Heart left ventricle (tissue), 16 donors: ENCODE measurements at regions of chr6 and their contacts with region 1.

Region 1: DNA sequence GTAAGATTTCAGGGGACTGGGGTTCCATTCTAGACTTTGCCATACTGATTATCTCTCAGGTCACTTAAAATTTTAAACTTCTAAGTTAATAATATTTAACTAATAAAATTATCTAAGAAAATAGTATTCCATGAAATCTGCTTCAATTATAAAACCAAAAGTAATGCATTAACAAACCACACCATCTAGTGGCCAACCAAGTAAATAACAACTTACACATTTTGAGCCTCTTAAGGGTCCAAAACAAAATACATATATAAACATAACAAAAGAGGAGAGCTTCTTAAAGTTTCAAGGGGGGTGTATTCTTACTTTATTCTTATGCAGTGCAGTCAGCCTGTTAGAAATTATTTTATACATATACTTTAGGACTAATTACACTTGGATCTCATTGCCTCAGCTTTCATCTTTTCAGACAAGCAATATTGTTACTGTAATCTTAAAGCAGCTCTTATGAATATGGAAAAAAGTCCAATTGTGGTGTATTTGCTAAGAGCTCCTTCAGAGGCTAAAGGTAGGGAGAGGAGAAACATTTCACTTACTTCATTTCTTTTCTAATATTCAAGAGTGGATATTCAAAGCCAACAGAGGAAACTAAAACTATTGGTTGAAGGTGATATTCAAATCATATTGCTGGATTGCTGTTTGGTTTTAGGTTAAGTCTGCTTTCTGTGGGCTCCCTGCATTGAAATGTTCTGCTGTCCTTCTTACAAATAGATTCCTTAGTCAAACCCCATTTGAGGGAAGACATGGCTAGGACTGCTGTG is 199.7 kb upstream of the SIM1 start:
- DNase-seq: no peak
- ATAC-seq: no peak
- H3K4me3 ChIP-seq: no peak overlapping the region
- H3K27ac ChIP-seq: no peak overlapping the region
- H3K4me1 ChIP-seq: no peaks in the 10 kb centered on the region
- H3K27me3 ChIP-seq: no peaks in the 10 kb centered on the region
- CTCF ChIP-seq: peak; percentile 61 to 79 (median 66)
- POLR2A ChIP-seq: no peak

Region 2: GRCh38 chr6:99868074-99868702 is 796.3 kb before region 1 on chr6:
- intact Hi-C with region 1: loop called in 2 of 10 experiments (anchors 10 kb)
- DNase-seq: peak; percentile 38 to 79 (median 51)
- ATAC-seq: peak in 3 of 4 donors; percentile 50 to 80 (median 58)
- H3K4me3 ChIP-seq: no peak overlapping the region
- H3K27ac ChIP-seq: no peak overlapping the region
- H3K4me1 ChIP-seq: peaks cover 0 to 4% (median 0%) of the 10 kb centered on the region in 12 donors
- H3K27me3 ChIP-seq: peaks cover 0 to 11% (median 0%) of the 10 kb centered on the region in 9 donors
- CTCF ChIP-seq: peak; percentile 63 to 82 (median 72)
- POLR2A ChIP-seq: no peak

Region 3: DNA sequence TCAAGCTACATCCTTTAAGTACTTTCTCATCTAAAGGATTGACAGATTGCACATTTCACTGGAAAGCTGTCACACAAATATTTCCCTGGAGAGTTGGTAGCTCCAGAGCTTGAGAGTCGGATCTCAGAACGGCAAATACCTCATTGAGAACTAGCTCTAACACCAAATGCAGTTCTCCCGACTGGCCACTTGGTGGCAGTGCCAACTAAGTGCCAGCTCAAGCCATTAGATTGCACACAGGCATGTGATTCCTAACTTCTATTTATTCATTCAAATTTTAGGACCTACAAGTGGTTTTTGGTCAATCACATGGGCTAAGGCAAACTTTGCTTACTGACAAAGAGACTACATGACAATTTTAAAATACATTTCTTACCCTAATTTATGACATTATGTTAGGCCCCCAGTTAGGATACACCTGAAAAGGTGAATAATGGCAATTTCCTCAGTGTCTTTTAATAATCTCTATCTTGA is 662.5 kb before region 1 on chr6:
- intact Hi-C with region 1: loop called in 3 of 10 experiments (anchors 10 kb)
- DNase-seq: peak in 4 of 5 donors; percentile 18 to 31 (median 26)
- ATAC-seq: peak in 3 of 4 donors; percentile 42 to 57 (median 55)
- H3K4me3 ChIP-seq: no peak overlapping the region
- H3K27ac ChIP-seq: no peak overlapping the region
- H3K4me1 ChIP-seq: no peaks in the 10 kb centered on the region
- H3K27me3 ChIP-seq: peaks cover 0 to 45% (median 3%) of the 10 kb centered on the region in 9 donors
- CTCF ChIP-seq: peak; percentile 71 to 88 (median 81)
- POLR2A ChIP-seq: no peak

Region 4: GRCh38 chr6:100105138-100105753 is 559.2 kb before region 1 on chr6:
- intact Hi-C with region 1: loop called in 5 of 10 experiments (anchors 5 to 10 kb)
- DNase-seq: no peak
- ATAC-seq: no peak
- H3K4me3 ChIP-seq: no peak overlapping the region
- H3K27ac ChIP-seq: no peak overlapping the region
- H3K4me1 ChIP-seq: no peaks in the 10 kb centered on the region
- H3K27me3 ChIP-seq: peaks cover 0 to 33% (median 0%) of the 10 kb centered on the region in 9 donors
- CTCF ChIP-seq: no peak
- POLR2A ChIP-seq: no peak

Region 5: GRCh38 chr6:100116411-100117194 is 547.9 kb before region 1 on chr6:
- intact Hi-C with region 1: loop called in 8 of 10 experiments (anchors 5 to 10 kb)
- DNase-seq: no peak
- ATAC-seq: no peak
- H3K4me3 ChIP-seq: no peak overlapping the region
- H3K27ac ChIP-seq: no peak overlapping the region
- H3K4me1 ChIP-seq: no peaks in the 10 kb centered on the region
- H3K27me3 ChIP-seq: peaks cover 0 to 8% (median 0%) of the 10 kb centered on the region in 9 donors
- CTCF ChIP-seq: peak; percentile 32 to 70 (median 56)
- POLR2A ChIP-seq: no peak

Region 6: GRCh38 chr6:100685747-100686146 is 21.3 kb after region 1 on chr6:
- intact Hi-C with region 1: no loop called
- DNase-seq: no peak
- ATAC-seq: no peak
- H3K4me3 ChIP-seq: no peak overlapping the region
- H3K27ac ChIP-seq: no peak overlapping the region
- H3K4me1 ChIP-seq: peaks cover 0 to 5% (median 0%) of the 10 kb centered on the region in 12 donors
- H3K27me3 ChIP-seq: no peaks in the 10 kb centered on the region
- CTCF ChIP-seq: no peak
- POLR2A ChIP-seq: no peak